ENCODE measurements at regions of chr12 and their contacts with region 1.

Region 1: DNA sequence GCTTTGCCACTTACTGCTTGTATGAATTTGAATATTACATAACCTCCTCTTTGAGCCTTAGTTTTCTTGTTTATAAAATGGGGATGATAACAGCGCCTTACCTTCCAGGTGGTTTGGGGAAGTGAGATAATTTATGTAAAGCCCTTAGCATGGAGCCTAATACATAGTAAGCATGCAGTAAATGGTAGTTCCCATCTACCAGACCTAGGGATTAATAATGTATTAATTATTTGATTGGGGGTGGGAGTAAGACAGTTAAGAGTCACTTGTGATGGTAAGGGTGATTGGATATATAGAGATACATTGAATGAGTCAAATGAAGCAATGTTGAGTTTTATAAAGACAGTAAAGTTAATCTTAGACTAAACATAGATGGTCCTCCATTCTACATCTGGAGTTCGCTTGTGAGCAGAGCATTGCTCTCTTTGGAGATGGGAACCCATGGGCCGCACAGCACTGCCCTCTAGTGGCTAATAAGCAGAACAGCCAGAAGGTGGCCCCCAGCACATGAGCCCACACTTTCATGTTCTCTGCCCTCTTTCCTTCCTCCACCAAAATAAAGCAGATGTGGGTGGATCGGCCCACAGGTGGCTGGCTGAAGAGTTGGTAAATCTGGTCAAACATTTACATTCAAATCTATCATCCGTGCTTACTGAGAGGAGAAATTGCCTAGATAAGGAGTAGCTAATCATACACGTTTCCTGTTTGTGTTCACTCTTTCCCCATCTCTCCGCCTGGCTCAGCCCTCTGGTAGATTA is 26.5 kb upstream of the TAMALIN start:
- DNase-seq: peak; percentile 59 to 88
- ATAC-seq: peak; percentile 95 to 100 (median 100)
- H3K4me3 ChIP-seq: no peak overlapping the region
- H3K4me3 Mint-ChIP-seq: no peak overlapping the region
- H3K27ac ChIP-seq: no peak overlapping the region
- H3K27ac Mint-ChIP-seq: no peak overlapping the region
- H3K4me1 ChIP-seq: peaks cover 10% of the 10 kb centered on the region
- H3K4me1 Mint-ChIP-seq: peaks cover 20 to 22% of the 10 kb centered on the region in 2 donors
- H3K27me3 ChIP-seq: no peaks in the 10 kb centered on the region
- H3K27me3 Mint-ChIP-seq: no peaks in the 10 kb centered on the region
- CTCF ChIP-seq: peak; percentile 82

Region 2: DNA sequence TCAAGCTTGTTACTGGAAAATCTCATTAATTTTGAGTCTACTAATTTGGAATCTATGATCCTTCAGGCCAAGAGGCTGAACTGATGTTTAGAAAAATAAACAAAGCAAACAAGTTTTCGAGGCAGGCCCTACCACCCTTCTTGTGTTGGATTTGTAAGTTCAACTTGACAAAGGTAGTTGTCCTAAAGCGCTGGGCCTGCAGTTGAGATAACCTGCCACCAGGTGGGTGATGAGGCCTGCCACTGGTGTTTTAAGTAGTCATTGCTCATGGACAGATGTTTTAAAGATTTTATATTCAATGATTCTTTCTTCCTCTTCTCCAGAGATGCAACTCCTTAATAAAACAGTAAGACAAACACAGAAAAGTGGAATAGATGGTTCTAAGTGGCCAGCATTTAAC is 53.5 kb before region 1 on chr12:
- intact Hi-C with region 1: loop called (anchors 1 kb)
- DNase-seq: peak in 1 of 2 donors; percentile 70
- ATAC-seq: peak in 2 of 3 donors; percentile 51 to 55
- H3K4me3 ChIP-seq: no peak overlapping the region
- H3K4me3 Mint-ChIP-seq: no peak overlapping the region
- H3K27ac ChIP-seq: no peak overlapping the region
- H3K27ac Mint-ChIP-seq: no peak overlapping the region
- H3K4me1 ChIP-seq: peaks cover 12% of the 10 kb centered on the region
- H3K4me1 Mint-ChIP-seq: peaks cover 0 to 10% of the 10 kb centered on the region in 2 donors
- H3K27me3 ChIP-seq: no peaks in the 10 kb centered on the region
- H3K27me3 Mint-ChIP-seq: peaks cover 0 to 5% of the 10 kb centered on the region in 2 donors
- CTCF ChIP-seq: peak; percentile 42